ENCODE measurements at regions of chr9 and their contacts with region 1.

Region 1: DNA sequence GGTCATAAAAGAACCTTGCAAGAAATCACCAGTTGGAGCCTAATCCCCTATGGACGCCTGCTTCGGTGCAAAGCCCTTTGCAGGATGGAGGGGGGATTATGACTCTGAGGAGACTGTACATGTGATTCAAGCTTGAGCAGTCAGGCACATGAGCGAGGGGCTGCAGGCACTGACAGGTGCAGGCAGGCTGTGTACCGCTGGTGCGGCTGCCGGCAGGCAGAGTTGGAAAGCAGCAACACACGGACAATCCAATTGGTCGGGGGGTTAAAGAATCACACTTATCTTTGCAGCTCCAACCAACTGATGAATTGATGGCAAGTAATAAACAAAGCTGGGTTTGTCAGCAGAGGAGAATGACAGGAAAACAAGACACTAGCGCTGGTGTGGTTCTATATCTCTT is 5.7 kb downstream of the WHRN start:
- DNase-seq: no peak
- ATAC-seq: no peak

Region 2: GRCh38 chr9:114611516-114612271 is 112.2 kb after region 1 on chr9:
- intact Hi-C with region 1: loop called in 1 of 2 experiments (anchors 10 kb)
- DNase-seq: peak; percentile 62
- ATAC-seq: peak; percentile 75 to 88

Measured in left cardiac atrium (tissue), 4 donors.